ENCODE measurements at regions of chr1 and their contacts with region 1.

Region 1: DNA sequence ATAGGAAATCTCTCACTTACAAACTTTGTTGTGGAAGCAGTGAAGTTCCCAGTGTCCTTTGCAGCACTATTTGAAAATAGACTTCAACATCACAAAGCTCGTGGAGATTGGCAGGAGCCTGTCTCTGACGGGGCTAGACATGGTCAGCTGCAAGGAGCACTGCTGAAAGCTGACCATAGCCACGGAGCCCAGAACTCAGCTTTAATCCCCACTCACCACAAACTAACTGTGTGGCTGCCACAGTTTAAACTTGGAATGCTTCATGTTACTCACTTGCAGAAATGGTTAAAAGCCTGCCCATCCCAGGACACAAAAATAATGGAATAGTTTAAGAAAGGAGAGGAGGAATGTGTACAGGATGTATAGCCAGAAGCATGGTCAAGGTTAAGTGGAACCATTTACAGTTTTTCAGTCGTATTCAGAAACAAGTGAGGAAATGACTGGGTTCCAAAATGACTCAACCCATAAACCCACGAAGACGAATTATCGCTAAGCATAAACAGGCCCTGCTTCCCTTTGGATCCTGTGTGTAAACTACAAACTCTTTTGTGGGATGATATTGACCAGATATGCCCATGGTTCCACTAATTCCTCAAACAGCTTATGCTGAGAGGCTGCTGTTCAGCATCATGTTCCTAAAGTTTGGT is 18.2 kb downstream of the DNALI1 start:
- DNase-seq: no peak
- H3K4me3 ChIP-seq: no peak overlapping the region
- H3K4me3 Mint-ChIP-seq: no peak overlapping the region
- H3K27ac Mint-ChIP-seq: no peak overlapping the region
- H3K4me1 ChIP-seq: no peaks in the 10 kb centered on the region
- H3K4me1 Mint-ChIP-seq: no peaks in the 10 kb centered on the region
- H3K27me3 ChIP-seq: no peaks in the 10 kb centered on the region
- H3K27me3 Mint-ChIP-seq: no peaks in the 10 kb centered on the region
- CTCF ChIP-seq: no peak

Region 2: GRCh38 chr1:37438869-37439343 is 136.1 kb before region 1 on chr1:
- CTCF ChIA-PET with region 1: no interaction called
- POLR2A ChIA-PET with region 1: no interaction called
- intact Hi-C with region 1: no loop called
- DNase-seq: no peak
- H3K4me3 ChIP-seq: no peak overlapping the region
- H3K4me3 Mint-ChIP-seq: no peak overlapping the region
- H3K27ac Mint-ChIP-seq: no peak overlapping the region
- H3K4me1 ChIP-seq: no peaks in the 10 kb centered on the region
- H3K4me1 Mint-ChIP-seq: no peaks in the 10 kb centered on the region
- H3K27me3 ChIP-seq: no peaks in the 10 kb centered on the region
- H3K27me3 Mint-ChIP-seq: peaks cover 18% of the 10 kb centered on the region
- CTCF ChIP-seq: no peak

Region 3: GRCh38 chr1:37474046-37474759 is 100.8 kb before region 1 on chr1 and contains the start of gene ZC3H12A:
- CTCF ChIA-PET with region 1: no interaction called
- POLR2A ChIA-PET with region 1: interaction called, 17 read pairs
- intact Hi-C with region 1: no loop called
- DNase-seq: peak; percentile 82 to 90
- H3K4me3 ChIP-seq: peak within 1 kb of the TSS; percentile 51
- H3K4me3 Mint-ChIP-seq: peak within 1 kb of the TSS; percentile 71
- H3K27ac Mint-ChIP-seq: no peak within 1 kb of the TSS
- H3K4me1 ChIP-seq: peaks cover 16% of the 10 kb centered on the region
- H3K4me1 Mint-ChIP-seq: peaks cover 7% of the 10 kb centered on the region
- H3K27me3 ChIP-seq: no peaks in the 10 kb centered on the region
- H3K27me3 Mint-ChIP-seq: no peaks in the 10 kb centered on the region
- CTCF ChIP-seq: no peak
- total RNA-seq, gene ZC3H12A: 4.7 and 4.9 TPM in 2 replicates

Region 4: DNA sequence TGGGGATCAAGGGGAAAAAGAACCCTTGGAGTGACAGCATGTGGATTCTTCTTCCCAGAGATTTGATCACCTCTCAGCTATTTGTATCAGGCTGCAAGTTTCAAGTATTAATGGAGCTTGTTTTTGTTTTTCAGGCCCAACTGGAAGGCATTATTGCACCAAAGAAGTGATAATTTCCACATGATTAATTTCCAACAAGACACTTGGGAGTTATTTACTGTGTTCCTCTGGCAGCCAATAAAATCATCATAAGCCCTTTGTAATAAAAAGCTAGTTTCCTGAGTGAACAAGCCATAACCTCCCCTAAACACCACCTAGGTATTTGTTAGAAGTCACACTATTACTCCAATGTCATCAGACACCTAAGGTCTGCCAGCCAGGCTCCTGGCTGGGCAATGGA is 10.1 kb before region 1 on chr1:
- CTCF ChIA-PET with region 1: no interaction called
- POLR2A ChIA-PET with region 1: interaction called, 11 read pairs
- intact Hi-C with region 1: no loop called
- DNase-seq: no peak
- H3K4me3 ChIP-seq: no peak overlapping the region
- H3K4me3 Mint-ChIP-seq: no peak overlapping the region
- H3K27ac Mint-ChIP-seq: no peak overlapping the region
- H3K4me1 ChIP-seq: peaks cover 17% of the 10 kb centered on the region
- H3K4me1 Mint-ChIP-seq: peaks cover 11% of the 10 kb centered on the region
- H3K27me3 ChIP-seq: no peaks in the 10 kb centered on the region
- H3K27me3 Mint-ChIP-seq: no peaks in the 10 kb centered on the region
- CTCF ChIP-seq: no peak